ENCODE measurements at regions of chr20 and their contacts with region 1.

Region 1: GRCh38 chr20:40438161-40438840 is 250.7 kb downstream of the MAFB start:
- DNase-seq: no peak
- H3K4me3 ChIP-seq: no peak overlapping the region
- H3K27ac ChIP-seq: no peak overlapping the region
- H3K4me1 ChIP-seq: peaks cover 6% of the 10 kb centered on the region
- H3K27me3 ChIP-seq: no peaks in the 10 kb centered on the region
- CTCF ChIP-seq: no peak

Region 2: DNA sequence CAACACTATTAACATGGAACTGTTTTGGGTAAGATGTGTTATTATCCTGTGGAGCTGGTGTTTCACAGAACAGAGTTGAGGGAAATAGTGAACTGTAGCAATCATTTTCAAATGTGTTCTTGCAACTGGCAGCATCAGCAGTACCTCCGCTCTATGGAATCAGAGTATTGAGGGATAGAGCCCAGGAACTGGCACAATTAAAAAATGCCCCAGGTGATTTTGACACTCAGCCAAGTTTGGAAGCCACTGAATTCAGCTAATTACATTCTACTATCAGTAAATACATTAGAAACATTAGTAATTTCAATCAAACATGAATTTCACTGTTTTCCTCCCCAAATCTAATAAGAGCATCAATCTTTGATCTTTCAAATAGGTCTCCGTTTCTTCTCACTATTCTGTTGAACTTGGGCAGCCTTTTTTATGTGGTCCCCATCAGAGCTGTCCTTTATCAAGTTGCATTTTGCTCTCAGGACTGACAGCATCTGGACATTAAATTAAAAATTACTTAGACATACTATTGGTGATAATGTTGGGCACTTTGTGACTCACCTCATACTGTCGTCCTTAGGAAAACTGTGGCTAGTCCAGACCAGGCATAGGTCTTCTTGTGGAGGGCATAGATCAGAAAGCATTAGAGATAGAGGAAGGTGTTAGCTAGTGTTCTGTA is 1224.7 kb before region 1 on chr20:
- CTCF ChIA-PET with region 1: no interaction called
- POLR2A ChIA-PET with region 1: interaction called, 18 read pairs
- intact Hi-C with region 1: no loop called
- DNase-seq: no peak
- H3K4me3 ChIP-seq: no peak overlapping the region
- H3K27ac ChIP-seq: no peak overlapping the region
- H3K4me1 ChIP-seq: no peaks in the 10 kb centered on the region
- H3K27me3 ChIP-seq: peaks cover 28% of the 10 kb centered on the region
- CTCF ChIP-seq: no peak

Region 3: GRCh38 chr20:40279390-40279789 is 158.9 kb before region 1 on chr20:
- CTCF ChIA-PET with region 1: no interaction called
- POLR2A ChIA-PET with region 1: no interaction called
- intact Hi-C with region 1: no loop called
- DNase-seq: peak; percentile 89
- H3K4me3 ChIP-seq: no peak overlapping the region
- H3K27ac ChIP-seq: peak overlapping the region; percentile 58
- H3K4me1 ChIP-seq: peaks cover 33% of the 10 kb centered on the region
- H3K27me3 ChIP-seq: no peaks in the 10 kb centered on the region
- CTCF ChIP-seq: no peak